Endothelial cell of umbilical vein (primary cell): ENCODE measurements at regions of chr4 and their contacts with region 1.

Region 1: GRCh38 chr4:102500696-102501446 is at the start of gene NFKB1:
- DNase-seq: peak; percentile 81
- H3K4me3 ChIP-seq: peak within 1 kb of the TSS; percentile 83 to 93 (median 88)
- H3K27ac ChIP-seq: peak within 1 kb of the TSS; percentile 90
- H3K4me1 ChIP-seq: peaks cover 22% of the 10 kb centered on the region
- H3K27me3 ChIP-seq: no peaks in the 10 kb centered on the region
- CTCF ChIP-seq: no peak
- POLR2A ChIP-seq: peak; percentile 54
- total RNA-seq, gene NFKB1: 41.4 and 42.0 TPM in 2 replicates

Region 2: DNA sequence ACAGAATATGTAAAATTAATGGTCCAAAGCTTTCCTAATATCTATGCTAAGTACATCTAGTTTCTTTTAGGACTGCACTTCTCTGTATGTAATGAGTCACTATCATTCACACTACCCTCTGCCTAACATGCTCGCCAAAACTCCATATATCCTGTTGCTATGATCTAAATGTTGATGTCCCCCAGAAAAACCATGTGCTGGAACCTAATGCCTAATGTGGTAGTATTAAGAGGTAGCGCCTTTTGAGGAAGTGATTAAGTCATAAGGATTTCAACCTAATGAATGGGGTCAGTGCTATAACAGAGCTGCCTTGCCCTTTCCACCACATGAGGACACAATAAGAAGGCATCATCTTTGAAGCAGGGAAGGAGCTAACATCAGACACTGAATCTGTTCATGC is 34.6 kb before region 1 on chr4:
- CTCF ChIA-PET with region 1: interaction called, 4 read pairs
- POLR2A ChIA-PET with region 1: no interaction called
- dilution Hi-C with region 1: no loop called
- intact Hi-C with region 1: loop called (anchors 1 kb)
- DNase-seq: peak; percentile 84
- H3K4me3 ChIP-seq: no peak overlapping the region
- H3K27ac ChIP-seq: no peak overlapping the region
- H3K4me1 ChIP-seq: peaks cover 33% of the 10 kb centered on the region
- H3K27me3 ChIP-seq: no peaks in the 10 kb centered on the region
- CTCF ChIP-seq: no peak
- POLR2A ChIP-seq: no peak

Region 3: DNA sequence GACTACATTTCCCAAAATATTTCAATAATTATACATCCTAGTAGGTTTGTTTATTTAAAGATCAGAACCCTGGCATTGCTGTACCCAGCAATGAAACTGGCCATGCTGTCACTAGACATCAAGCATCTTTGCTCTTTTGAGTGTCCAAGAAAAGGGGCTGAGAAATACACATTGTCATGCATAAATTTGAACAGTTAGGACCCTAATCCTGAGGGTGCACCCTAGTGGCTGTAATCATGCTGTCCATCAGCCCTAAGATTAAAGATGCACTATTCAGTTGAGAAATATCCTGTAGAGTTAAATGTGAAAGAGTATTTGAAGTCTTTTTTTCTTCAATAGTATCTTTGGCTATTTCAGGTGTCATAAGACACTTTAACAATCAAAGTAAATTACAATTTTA is 109.1 kb after region 1 on chr4:
- CTCF ChIA-PET with region 1: interaction called, 3 read pairs
- POLR2A ChIA-PET with region 1: no interaction called
- dilution Hi-C with region 1: no loop called
- intact Hi-C with region 1: loop called (anchors 5 kb)
- DNase-seq: peak; percentile 18
- H3K4me3 ChIP-seq: no peak overlapping the region
- H3K27ac ChIP-seq: no peak overlapping the region
- H3K4me1 ChIP-seq: peaks cover 25% of the 10 kb centered on the region
- H3K27me3 ChIP-seq: no peaks in the 10 kb centered on the region
- CTCF ChIP-seq: peak; percentile 18 to 25
- POLR2A ChIP-seq: no peak

Region 4: DNA sequence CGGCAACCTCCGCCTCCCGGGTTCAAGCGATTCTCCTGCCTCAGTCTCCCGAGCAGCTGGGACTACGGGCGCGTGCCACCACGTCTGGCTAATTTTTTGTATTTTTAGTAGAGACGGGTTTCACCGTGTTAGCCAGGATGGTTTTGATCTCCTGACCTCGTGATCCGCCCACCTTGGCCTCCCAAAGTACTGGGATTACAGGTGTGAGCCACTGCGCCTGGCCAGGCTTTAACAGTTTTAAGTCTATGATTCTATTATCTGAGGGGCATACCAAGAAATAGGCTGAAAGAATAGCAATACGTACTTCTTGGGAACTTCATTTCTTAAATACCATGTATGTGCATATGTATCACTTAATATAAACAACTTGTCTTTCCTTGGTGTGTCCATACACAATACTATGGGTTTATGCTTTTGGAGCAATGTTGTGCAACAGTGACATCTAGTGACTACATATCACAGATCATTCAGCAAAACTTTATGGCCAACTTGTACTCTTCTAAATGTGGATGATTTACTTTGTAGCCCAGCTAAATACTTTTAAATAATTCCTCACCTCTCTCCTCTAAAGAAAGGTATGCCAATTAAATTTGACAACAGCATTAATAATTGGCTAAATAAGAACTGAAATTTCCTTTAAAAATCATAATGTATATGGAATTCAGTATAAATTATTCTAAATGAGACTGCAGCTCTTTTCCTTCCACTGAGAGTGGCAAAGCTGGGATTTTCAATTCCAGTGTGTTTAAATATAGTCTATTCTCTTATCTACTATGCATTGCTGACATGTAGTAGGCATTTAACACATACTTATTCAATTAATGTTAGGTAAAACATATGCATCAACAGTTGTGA is 508.2 kb after region 1 on chr4:
- CTCF ChIA-PET with region 1: interaction called, 5 read pairs
- POLR2A ChIA-PET with region 1: no interaction called
- dilution Hi-C with region 1: no loop called
- intact Hi-C with region 1: loop called (anchors 2 kb)
- DNase-seq: peak; percentile 76
- H3K4me3 ChIP-seq: no peak overlapping the region
- H3K27ac ChIP-seq: no peak overlapping the region
- H3K4me1 ChIP-seq: no peaks in the 10 kb centered on the region
- H3K27me3 ChIP-seq: peaks cover 2% of the 10 kb centered on the region in 2 experiments
- CTCF ChIP-seq: peak; percentile 49 to 51
- POLR2A ChIP-seq: no peak